Activated CD4-positive, alpha-beta T cell treated with anti-CD3 and anti-CD28 coated beads for 36 hours (primary cell): ENCODE measurements at regions of chr11 and their contacts with region 1.

Region 1: GRCh38 chr11:86456052-86456939 is 81.6 kb downstream of the CCDC81 start:
- DNase-seq: peak; percentile 93
- ATAC-seq: peak; percentile 92
- H3K4me3 Mint-ChIP-seq: no peak overlapping the region
- H3K27ac Mint-ChIP-seq: no peak overlapping the region
- H3K4me1 Mint-ChIP-seq: peaks cover 21% of the 10 kb centered on the region
- H3K27me3 Mint-ChIP-seq: no peaks in the 10 kb centered on the region

Region 2: DNA sequence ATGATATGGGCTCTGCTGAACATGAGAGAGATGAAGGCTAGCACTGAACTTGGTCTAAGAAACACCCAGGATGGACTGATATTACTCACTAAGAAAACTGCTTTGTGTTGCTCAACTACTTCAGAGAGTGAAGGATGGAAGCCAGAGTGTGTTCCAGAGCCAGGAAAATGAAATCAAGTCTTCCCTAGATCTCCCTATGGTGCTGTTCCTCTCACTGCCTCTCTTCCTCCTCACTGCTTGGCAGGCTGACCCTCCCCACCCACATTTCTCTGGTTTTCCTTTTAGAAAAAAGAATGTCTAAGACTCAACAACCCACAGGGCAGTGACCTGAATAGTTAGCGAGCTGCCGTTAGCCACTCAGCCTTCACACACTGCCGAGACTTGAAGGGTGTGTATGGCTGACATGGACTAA is 16.0 kb before region 1 on chr11:
- CTCF ChIA-PET with region 1: interaction called, 14 read pairs
- POLR2A ChIA-PET with region 1: no interaction called
- intact Hi-C with region 1: no loop called
- DNase-seq: no peak
- ATAC-seq: no peak
- H3K4me3 Mint-ChIP-seq: no peak overlapping the region
- H3K27ac Mint-ChIP-seq: no peak overlapping the region
- H3K4me1 Mint-ChIP-seq: peaks cover 25% of the 10 kb centered on the region
- H3K27me3 Mint-ChIP-seq: no peaks in the 10 kb centered on the region

Region 3: GRCh38 chr11:86469491-86470393 is 13.4 kb after region 1 on chr11:
- CTCF ChIA-PET with region 1: interaction called, 10 read pairs
- POLR2A ChIA-PET with region 1: no interaction called
- intact Hi-C with region 1: no loop called
- DNase-seq: no peak
- ATAC-seq: no peak
- H3K4me3 Mint-ChIP-seq: no peak overlapping the region
- H3K27ac Mint-ChIP-seq: no peak overlapping the region
- H3K4me1 Mint-ChIP-seq: peaks cover 7% of the 10 kb centered on the region
- H3K27me3 Mint-ChIP-seq: no peaks in the 10 kb centered on the region

Region 4: DNA sequence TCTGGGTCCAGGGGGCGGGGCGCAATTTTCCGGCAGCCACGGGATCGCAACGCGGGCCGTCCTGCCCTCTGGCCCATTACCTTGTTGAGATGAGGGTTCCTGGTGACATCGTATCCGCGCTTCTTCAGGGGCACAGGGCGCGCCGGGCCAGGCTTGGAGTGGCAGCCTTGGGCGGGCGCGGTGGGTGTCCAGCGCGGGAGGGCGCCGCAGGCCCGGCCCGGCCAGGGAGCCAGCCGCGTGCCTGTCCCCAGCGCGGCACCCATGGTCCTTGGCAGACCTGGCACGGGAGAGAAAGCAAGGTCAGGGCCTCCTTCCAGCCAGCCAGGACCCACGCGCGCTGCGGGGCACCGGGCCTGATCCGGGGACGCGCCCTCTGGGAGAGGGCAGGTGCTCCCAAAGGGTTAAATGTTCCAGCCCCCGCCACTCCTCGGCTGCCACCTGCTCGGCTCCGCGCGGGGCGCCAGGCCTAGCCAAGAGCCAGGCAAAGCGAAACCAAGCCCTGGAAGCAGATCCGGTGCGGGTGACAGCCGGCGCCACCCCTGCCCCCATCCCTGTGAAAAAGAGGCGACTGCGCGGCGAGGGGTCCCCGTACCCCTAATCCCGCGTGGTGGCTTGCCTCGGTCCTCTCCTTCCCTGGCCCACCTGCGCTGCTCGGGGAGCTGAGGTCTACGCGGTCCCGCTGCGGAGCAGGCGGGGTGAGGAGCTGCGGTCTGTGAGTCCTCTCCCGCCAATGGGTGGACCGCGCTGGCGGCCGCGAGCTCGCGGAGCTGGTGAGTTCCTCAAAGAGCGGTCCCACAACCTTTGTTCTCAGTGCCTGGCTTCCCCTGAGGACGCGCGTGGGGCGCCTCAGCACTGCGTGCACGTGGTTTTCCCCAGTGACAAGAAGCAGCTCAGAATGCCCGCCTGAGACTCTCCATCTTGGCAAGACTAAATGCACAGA is 215.7 kb after region 1 on chr11 and contains the start of gene ME3:
- CTCF ChIA-PET with region 1: interaction called, 3 read pairs
- POLR2A ChIA-PET with region 1: no interaction called
- intact Hi-C with region 1: loop called in 1 of 2 experiments (anchors 2 kb)
- DNase-seq: peak; percentile 72
- ATAC-seq: peak; percentile 89
- H3K4me3 Mint-ChIP-seq: peak within 1 kb of the TSS; percentile 64
- H3K27ac Mint-ChIP-seq: peak within 1 kb of the TSS; percentile 71
- H3K4me1 Mint-ChIP-seq: peaks cover 24% of the 10 kb centered on the region
- H3K27me3 Mint-ChIP-seq: peaks cover 17% of the 10 kb centered on the region
- total RNA-seq, gene ME3: 4.0 to 6.0 TPM

Region 5: DNA sequence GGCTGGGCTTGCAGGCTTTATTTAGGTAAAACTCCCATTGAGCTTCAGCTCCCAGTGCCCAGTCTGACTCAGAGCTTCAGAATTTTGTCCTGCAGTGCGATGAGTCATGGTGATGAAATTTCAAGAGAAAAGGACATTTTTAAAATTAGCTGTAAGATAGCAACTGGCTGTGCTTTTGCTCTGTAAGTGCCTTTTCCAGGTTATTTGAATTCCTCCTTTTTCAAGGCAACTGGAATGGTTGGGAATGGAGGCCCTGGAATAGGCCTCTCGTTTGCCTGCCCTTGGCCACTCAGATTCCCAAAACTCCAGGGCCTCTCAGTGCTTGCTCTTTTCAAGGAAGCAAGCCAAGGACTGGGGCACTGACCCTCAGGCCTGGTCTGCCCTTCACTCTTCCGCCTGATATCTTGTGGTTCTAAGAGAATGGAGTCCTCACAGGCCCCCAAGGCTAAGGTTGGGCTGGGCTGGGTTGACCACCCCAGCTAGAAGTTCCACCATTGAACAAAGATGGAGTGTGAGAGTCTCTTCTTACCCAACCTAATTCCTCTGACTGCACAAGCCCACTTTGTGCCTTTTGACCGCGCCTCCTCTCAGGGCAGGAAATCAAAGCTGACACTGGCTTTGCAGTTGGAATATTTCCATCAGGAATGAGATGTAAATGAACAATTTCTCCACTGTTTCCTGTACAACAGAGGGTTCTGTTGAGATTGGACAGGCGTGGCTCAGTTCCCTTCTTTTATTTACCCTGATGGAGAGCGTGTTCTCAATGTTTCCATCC is 284.6 kb after region 1 on chr11:
- CTCF ChIA-PET with region 1: no interaction called
- POLR2A ChIA-PET with region 1: no interaction called
- intact Hi-C with region 1: loop called in 1 of 2 experiments (anchors 5 kb)
- DNase-seq: peak; percentile 60
- ATAC-seq: peak; percentile 52
- H3K4me3 Mint-ChIP-seq: no peak overlapping the region
- H3K27ac Mint-ChIP-seq: peak overlapping the region; percentile 62
- H3K4me1 Mint-ChIP-seq: peaks cover 30% of the 10 kb centered on the region
- H3K27me3 Mint-ChIP-seq: peaks cover 14% of the 10 kb centered on the region

Region 6: DNA sequence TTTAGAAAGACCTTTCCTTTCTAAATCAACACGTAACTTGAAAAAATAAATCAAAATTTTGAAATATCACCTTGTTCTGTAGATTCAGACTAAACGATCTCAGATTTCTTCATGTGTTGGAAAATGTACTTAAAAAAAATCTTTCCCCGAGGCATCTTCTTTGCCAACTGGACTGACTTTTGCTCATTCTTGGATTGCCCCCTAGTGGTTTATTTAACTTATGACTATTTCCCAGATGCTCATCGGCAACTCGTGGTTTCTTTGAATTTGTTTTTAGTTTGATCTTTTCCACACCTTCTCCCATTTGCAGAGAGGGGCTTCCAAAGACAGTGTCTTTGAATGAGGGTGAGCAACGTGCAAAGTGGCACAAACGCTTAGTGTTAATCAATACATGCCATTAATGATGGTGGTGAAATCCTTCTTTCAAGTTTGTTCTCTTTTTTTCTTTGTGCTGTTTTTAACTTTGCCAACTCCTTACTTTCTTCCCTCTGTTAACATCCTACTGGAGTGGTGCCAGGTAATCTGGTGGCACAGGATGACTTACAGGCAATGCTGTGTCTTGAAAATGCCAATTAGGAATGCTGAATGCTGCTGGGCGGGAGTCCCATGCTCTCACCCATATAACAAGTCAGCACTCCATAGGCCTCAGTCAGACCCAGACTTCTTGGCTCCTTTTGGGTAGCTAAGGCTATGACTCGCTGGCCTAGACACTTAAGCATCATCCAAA is 362.3 kb after region 1 on chr11:
- CTCF ChIA-PET with region 1: interaction called, 26 read pairs
- POLR2A ChIA-PET with region 1: no interaction called
- intact Hi-C with region 1: loop called (anchors 1 kb)
- DNase-seq: no peak
- ATAC-seq: no peak
- H3K4me3 Mint-ChIP-seq: no peak overlapping the region
- H3K27ac Mint-ChIP-seq: no peak overlapping the region
- H3K4me1 Mint-ChIP-seq: peaks cover 6% of the 10 kb centered on the region
- H3K27me3 Mint-ChIP-seq: peaks cover 27% of the 10 kb centered on the region

Region 7: GRCh38 chr11:86919557-86920210 is 463.4 kb after region 1 on chr11:
- CTCF ChIA-PET with region 1: interaction called, 3 read pairs
- POLR2A ChIA-PET with region 1: no interaction called
- intact Hi-C with region 1: loop called in 1 of 2 experiments (anchors 2 kb)
- DNase-seq: no peak
- ATAC-seq: peak; percentile 51
- H3K4me3 Mint-ChIP-seq: no peak overlapping the region
- H3K27ac Mint-ChIP-seq: no peak overlapping the region
- H3K4me1 Mint-ChIP-seq: peaks cover 3% of the 10 kb centered on the region
- H3K27me3 Mint-ChIP-seq: no peaks in the 10 kb centered on the region